ENCODE measurements at regions of chr17 and their contacts with region 1.

Region 1: DNA sequence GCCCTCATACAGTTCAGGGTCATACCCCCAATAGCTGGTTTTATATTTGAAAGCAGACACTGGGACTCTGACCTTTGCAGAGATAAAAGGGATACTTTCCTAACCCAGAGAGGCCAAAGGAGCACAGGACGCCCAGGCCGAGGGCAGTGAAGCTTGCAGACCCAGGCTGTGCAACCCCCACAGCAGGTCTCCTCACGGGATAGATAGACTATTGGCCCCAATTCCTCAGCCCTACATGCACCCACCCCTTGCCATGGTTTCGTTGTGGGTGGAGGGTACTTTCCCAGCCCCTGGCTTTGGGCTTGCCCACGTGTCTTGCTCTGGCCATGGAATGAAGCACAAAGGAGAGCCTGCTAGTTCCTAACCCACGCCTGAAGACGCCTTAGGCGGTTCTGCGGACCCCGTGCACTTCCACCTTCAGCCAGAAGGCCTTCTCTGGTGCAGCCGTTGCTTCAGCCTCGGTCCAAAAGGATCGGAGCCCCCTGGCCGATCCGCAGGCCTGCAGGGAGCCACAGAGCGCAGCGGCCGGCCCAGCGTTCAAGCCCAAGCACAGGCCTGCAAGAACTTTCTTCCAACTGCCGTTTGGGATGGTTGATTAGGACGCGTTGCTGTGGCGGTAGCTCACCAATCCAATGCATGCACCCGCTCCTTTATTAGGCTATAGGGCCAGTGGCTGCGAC is 9.8 kb upstream of the BRCA1 start:
- DNase-seq: no peak
- ATAC-seq: no peak
- H3K4me3 ChIP-seq: no peak overlapping the region
- H3K27ac ChIP-seq: no peak overlapping the region
- H3K4me1 ChIP-seq: no peaks in the 10 kb centered on the region
- H3K27me3 ChIP-seq: no peaks in the 10 kb centered on the region
- CTCF ChIP-seq: no peak

Region 2: GRCh38 chr17:43024407-43025289 is 110.3 kb before region 1 on chr17 and contains the start of gene RND2:
- CTCF ChIA-PET with region 1: no interaction called
- POLR2A ChIA-PET with region 1: no interaction called
- in situ Hi-C with region 1: no loop called
- intact Hi-C with region 1: no loop called
- DNase-seq: peak; percentile 52
- ATAC-seq: peak; percentile 65
- H3K4me3 ChIP-seq: peak within 1 kb of the TSS; percentile 46 to 75
- H3K27ac ChIP-seq: 0 out of 2 replicates have a peak within 1 kb of the TSS, but pooled peaks have one; percentile 39
- H3K4me1 ChIP-seq: peaks cover 8% of the 10 kb centered on the region
- H3K27me3 ChIP-seq: no peaks in the 10 kb centered on the region
- CTCF ChIP-seq: no peak; the same call in 1 of the 2 replicates
- total RNA-seq, gene RND2: 0.59 TPM

Region 3: GRCh38 chr17:43155666-43156065 is 20.8 kb after region 1 on chr17:
- CTCF ChIA-PET with region 1: no interaction called
- POLR2A ChIA-PET with region 1: interaction called, 11 read pairs
- in situ Hi-C with region 1: no loop called
- intact Hi-C with region 1: no loop called
- DNase-seq: no peak
- ATAC-seq: no peak
- H3K4me3 ChIP-seq: no peak overlapping the region
- H3K27ac ChIP-seq: no peak overlapping the region
- H3K4me1 ChIP-seq: no peaks in the 10 kb centered on the region
- H3K27me3 ChIP-seq: no peaks in the 10 kb centered on the region
- CTCF ChIP-seq: no peak